ENCODE measurements at regions of chr18 and their contacts with region 1.

Region 1: GRCh38 chr18:12934454-12935071 is 13.2 kb upstream of the SEH1L start:
- DNase-seq: peak; percentile 34
- ATAC-seq: peak; percentile 96
- H3K4me3 ChIP-seq: no peak overlapping the region
- H3K27ac ChIP-seq: no peak overlapping the region
- H3K4me1 ChIP-seq: no peaks in the 10 kb centered on the region
- H3K27me3 ChIP-seq: no peaks in the 10 kb centered on the region; a peak in 2 of 4 replicates
- CTCF ChIP-seq: peak; percentile 95 to 99 (median 98); a peak in 5 of 6 replicates
- EP300 ChIP-seq: no peak
- POLR2A ChIP-seq: no peak
- RAD21 ChIP-seq: peak; percentile 100

Region 2: GRCh38 chr18:12531749-12532148 is 402.8 kb before region 1 on chr18:
- CTCF ChIA-PET with region 1: no interaction called
- POLR2A ChIA-PET with region 1: no interaction called
- RAD21 ChIA-PET with region 1: no interaction called
- SMC1A ChIA-PET with region 1: no interaction called
- in situ Hi-C with region 1: no loop called
- intact Hi-C with region 1: loop called (anchors 10 kb)
- DNase-seq: no peak
- ATAC-seq: no peak
- H3K4me3 ChIP-seq: no peak overlapping the region
- H3K27ac ChIP-seq: no peak overlapping the region
- H3K4me1 ChIP-seq: no peaks in the 10 kb centered on the region
- H3K27me3 ChIP-seq: no peaks in the 10 kb centered on the region; a peak in 2 of 4 replicates
- CTCF ChIP-seq: no peak
- EP300 ChIP-seq: no peak
- POLR2A ChIP-seq: no peak
- RAD21 ChIP-seq: peak; percentile 28; the same call in 1 of the 2 replicates

Region 3: DNA sequence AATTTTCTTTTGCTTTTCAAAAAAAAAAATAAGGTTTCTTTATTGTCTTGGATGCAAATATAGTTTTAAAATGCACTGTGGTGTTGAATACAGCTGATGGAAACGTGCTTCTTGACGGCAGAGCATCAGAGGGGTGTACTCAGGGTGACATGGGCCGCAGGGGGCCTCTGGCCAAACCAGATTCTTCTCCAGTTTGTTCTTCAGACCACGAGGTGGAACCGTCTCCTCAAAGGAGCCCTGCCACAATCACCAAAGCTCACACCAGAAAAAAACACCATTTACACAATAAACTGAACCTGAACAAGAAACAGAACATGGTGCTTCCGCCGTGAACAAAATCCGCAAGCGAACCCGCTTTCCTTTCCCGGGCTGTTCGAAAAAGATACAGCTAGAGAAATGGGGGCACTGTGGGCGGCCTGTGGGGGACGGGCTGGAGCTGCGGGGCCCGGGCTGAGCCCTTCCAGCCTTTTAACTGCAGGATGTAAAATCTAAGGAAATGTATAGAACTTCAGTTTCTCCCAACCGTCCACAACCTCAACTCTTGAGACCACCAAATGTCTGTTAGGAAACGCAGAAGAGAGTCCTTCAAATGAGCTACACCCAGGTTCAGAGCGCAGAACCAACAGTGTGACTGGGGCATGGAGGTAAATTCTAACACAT is 197.2 kb before region 1 on chr18:
- CTCF ChIA-PET with region 1: interaction called, 67 read pairs
- POLR2A ChIA-PET with region 1: no interaction called
- RAD21 ChIA-PET with region 1: interaction called, 4 read pairs
- SMC1A ChIA-PET with region 1: interaction called, 10 read pairs
- in situ Hi-C with region 1: no loop called
- intact Hi-C with region 1: no loop called
- DNase-seq: no peak
- ATAC-seq: no peak
- H3K4me3 ChIP-seq: no peak overlapping the region
- H3K27ac ChIP-seq: no peak overlapping the region
- H3K4me1 ChIP-seq: no peaks in the 10 kb centered on the region
- H3K27me3 ChIP-seq: no peaks in the 10 kb centered on the region
- CTCF ChIP-seq: peak in 2 of 3 experiments; percentile 4 to 17; a peak in 1 of 6 replicates
- EP300 ChIP-seq: no peak
- POLR2A ChIP-seq: no peak
- RAD21 ChIP-seq: peak; percentile 21; the same call in 1 of the 2 replicates

Region 4: DNA sequence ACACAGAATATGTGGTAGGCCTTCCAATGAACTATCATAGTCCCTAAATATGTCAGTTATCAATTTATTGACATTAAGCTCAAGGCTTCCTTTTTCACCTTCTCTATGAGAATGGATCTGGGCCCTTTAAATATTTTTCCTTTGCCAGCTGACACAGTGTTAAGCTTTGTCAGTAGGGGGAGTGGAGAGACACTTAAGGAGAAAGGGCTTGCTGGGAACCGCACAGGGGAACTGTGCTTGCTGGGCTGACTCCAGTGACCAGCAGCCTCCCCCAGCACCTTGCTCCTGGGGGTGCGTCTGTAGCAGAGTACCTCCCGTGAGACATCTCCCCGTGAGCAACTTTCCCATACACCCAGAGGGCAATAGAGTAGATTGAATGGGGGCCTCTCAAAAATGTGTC is 44.1 kb before region 1 on chr18:
- CTCF ChIA-PET with region 1: interaction called, 14 read pairs
- POLR2A ChIA-PET with region 1: no interaction called
- RAD21 ChIA-PET with region 1: interaction called, 11 read pairs
- SMC1A ChIA-PET with region 1: interaction called, 10 read pairs
- in situ Hi-C with region 1: no loop called
- intact Hi-C with region 1: loop called (anchors 2 kb)
- DNase-seq: no peak
- ATAC-seq: peak; percentile 57
- H3K4me3 ChIP-seq: no peak overlapping the region
- H3K27ac ChIP-seq: no peak overlapping the region
- H3K4me1 ChIP-seq: peaks cover 11% of the 10 kb centered on the region; the same call in 1 of the 2 replicates
- H3K27me3 ChIP-seq: peaks cover 0 to under 1% of the 10 kb centered on the region in 2 experiments; a peak in 1 of 4 replicates
- CTCF ChIP-seq: peak; percentile 14 to 32 (median 26); a peak in 3 of 6 replicates
- EP300 ChIP-seq: no peak
- POLR2A ChIP-seq: no peak
- RAD21 ChIP-seq: no peak

Measured in GM12878 (cell line).